Tibial artery (tissue), 4 donors: ENCODE measurements at regions of chr19 and their contacts with region 1.

Region 1: GRCh38 chr19:3665681-3666544 is 34.4 kb downstream of the PIP5K1C start:
- DNase-seq: peak; percentile 50 to 81
- H3K4me3 ChIP-seq: no peak overlapping the region
- H3K27ac ChIP-seq: no peak overlapping the region
- H3K4me1 ChIP-seq: peaks cover 0 to 48% (median 39%) of the 10 kb centered on the region in 4 donors
- H3K27me3 ChIP-seq: no peaks in the 10 kb centered on the region
- CTCF ChIP-seq: peak; percentile 94 to 96

Region 2: GRCh38 chr19:3700221-3701032 is 34.5 kb after region 1 on chr19 and contains the start of gene PIP5K1C:
- intact Hi-C with region 1: loop called (anchors 1 kb)
- DNase-seq: peak; percentile 82 to 90
- H3K4me3 ChIP-seq: peak within 1 kb of the TSS; percentile 79 to 98
- H3K27ac ChIP-seq: peak within 1 kb of the TSS; percentile 86 to 87
- H3K4me1 ChIP-seq: peaks cover 0 to 41% (median 21%) of the 10 kb centered on the region in 4 donors
- H3K27me3 ChIP-seq: peaks cover 0 to 9% of the 10 kb centered on the region in 2 donors
- CTCF ChIP-seq: peak; percentile 76 to 96